Breast epithelium (tissue), 4 donors: ENCODE measurements at regions of chr1 and their contacts with region 1.

Region 1: DNA sequence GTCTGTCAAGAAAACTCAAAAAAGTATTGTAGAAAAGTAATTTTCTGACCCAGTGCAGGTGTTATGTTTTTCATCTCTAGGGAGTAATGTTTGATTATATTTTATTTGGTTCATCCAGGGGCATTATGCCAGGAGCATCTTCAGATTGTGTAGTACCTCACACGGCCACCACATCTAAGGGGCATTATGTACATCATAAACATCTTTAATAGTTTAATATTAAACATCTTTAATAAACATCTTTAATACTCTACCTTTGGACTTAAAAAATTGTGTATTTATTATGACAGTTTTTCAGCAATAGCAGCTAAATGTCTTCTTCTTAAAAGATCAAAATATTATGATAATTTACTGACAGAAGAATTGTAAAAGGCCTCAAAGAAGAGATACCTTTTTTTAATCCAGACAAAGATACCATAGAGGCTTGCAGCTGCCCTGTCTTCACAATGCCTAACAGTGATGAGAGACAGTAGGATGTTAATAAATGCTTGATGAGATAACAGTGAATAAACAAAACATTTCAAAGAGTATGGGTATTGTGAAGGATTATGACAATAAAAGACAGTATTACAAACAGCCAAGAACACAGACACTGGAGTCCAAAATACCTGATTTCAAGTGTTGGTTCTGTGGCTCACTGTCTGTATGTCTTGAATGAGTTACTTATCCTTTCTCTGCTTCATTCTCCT is 240.9 kb upstream of the ADGRL2 start:
- DNase-seq: no peak
- H3K4me3 ChIP-seq: no peak overlapping the region
- H3K27ac ChIP-seq: no peak overlapping the region
- H3K4me1 ChIP-seq: no peaks in the 10 kb centered on the region
- H3K27me3 ChIP-seq: no peaks in the 10 kb centered on the region
- CTCF ChIP-seq: no peak
- POLR2A ChIP-seq: no peak

Region 2: GRCh38 chr1:81600878-81601622 is 41.2 kb after region 1 on chr1:
- intact Hi-C with region 1: no loop called
- DNase-seq: no peak
- H3K4me3 ChIP-seq: no peak overlapping the region
- H3K27ac ChIP-seq: no peak overlapping the region
- H3K4me1 ChIP-seq: no peaks in the 10 kb centered on the region
- H3K27me3 ChIP-seq: no peaks in the 10 kb centered on the region
- CTCF ChIP-seq: no peak
- POLR2A ChIP-seq: no peak

Region 3: DNA sequence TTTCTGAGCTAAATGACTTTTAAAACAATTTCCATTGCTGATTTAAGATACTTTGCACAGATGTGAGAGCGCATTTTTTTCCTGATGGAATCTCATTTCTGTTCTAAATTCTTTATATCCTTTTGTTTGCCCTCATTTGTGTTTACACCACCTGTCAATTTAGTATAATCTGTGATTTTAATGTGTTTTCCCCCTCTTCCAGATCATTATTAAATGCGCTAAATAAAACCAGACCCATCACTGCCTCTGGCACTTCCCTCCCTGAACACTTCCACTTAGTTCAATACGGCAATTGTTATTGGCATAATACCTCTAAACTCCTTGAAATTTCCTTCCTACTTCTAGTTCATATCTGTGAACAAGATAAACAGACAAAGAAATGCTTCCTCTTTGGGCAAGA is 54.0 kb after region 1 on chr1:
- intact Hi-C with region 1: loop called (anchors 2 kb)
- DNase-seq: no peak
- H3K4me3 ChIP-seq: no peak overlapping the region
- H3K27ac ChIP-seq: no peak overlapping the region
- H3K4me1 ChIP-seq: no peaks in the 10 kb centered on the region
- H3K27me3 ChIP-seq: no peaks in the 10 kb centered on the region
- CTCF ChIP-seq: no peak
- POLR2A ChIP-seq: no peak